Activated CD4-positive, alpha-beta memory T cell treated with anti-CD3 and anti-CD28 coated beads for 36 hours (primary cell): ENCODE measurements at regions of chr5 and their contacts with region 1.

Region 1: GRCh38 chr5:55159763-55160492 is at the start of gene GPX8:
- DNase-seq: no peak
- H3K4me3 Mint-ChIP-seq: no peak within 1 kb of the TSS
- H3K27ac Mint-ChIP-seq: no peak within 1 kb of the TSS
- H3K4me1 Mint-ChIP-seq: no peaks in the 10 kb centered on the region
- H3K27me3 Mint-ChIP-seq: peaks cover 16% of the 10 kb centered on the region
- total RNA-seq, gene GPX8: not detected

Region 2: DNA sequence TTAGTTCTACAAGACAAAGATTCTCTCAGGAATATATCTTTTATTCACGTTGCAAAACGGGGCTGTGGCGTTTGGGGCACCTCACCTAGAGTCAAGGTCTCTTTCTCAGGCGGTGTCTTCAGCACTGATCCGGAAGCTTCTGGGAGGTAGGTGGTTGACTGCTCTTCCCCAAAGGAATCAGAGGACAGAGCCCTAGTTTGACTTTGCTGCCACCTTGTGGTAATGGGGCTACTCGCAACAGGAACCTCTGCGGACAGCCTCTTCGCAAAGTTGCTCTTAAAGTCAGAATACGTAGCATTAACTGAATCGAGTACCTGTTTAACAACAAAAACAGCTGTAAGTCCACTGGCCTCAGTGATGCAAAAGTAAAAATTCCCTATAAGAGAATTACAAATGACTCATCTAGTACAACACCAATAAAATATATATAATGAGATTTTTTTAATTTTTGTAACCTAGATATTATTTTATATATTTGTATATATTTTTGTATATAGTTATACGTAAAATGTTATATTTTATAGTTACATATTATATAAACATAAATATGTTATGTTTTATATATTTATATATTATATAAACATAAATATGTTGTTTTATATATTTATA is 13.3 kb before region 1 on chr5:
- CTCF ChIA-PET with region 1: interaction called, 16 read pairs
- POLR2A ChIA-PET with region 1: no interaction called
- intact Hi-C with region 1: no loop called
- DNase-seq: peak; percentile 89
- H3K4me3 Mint-ChIP-seq: no peak overlapping the region
- H3K27ac Mint-ChIP-seq: no peak overlapping the region
- H3K4me1 Mint-ChIP-seq: peaks cover 12% of the 10 kb centered on the region
- H3K27me3 Mint-ChIP-seq: peaks cover 1% of the 10 kb centered on the region